ENCODE measurements at regions of chr1 and their contacts with region 1.

Region 1: GRCh38 chr1:145996433-145997015 is at the start of gene TXNIP:
- DNase-seq: peak; percentile 89
- H3K4me3 Mint-ChIP-seq: peak within 1 kb of the TSS; percentile 85
- H3K27ac Mint-ChIP-seq: peak within 1 kb of the TSS; percentile 95
- H3K4me1 Mint-ChIP-seq: peaks cover 62% of the 10 kb centered on the region
- H3K27me3 Mint-ChIP-seq: no peaks in the 10 kb centered on the region
- total RNA-seq, gene TXNIP: 37.8 and 39.1 TPM in 2 replicates

Region 2: GRCh38 chr1:145918144-145918992 is 78.2 kb before region 1 on chr1 and contains the start of gene PEX11B:
- intact Hi-C with region 1: loop called (anchors 5 kb)
- DNase-seq: peak; percentile 88
- H3K4me3 Mint-ChIP-seq: peak within 1 kb of the TSS; percentile 88
- H3K27ac Mint-ChIP-seq: peak within 1 kb of the TSS; percentile 92
- H3K4me1 Mint-ChIP-seq: peaks cover 35% of the 10 kb centered on the region
- H3K27me3 Mint-ChIP-seq: no peaks in the 10 kb centered on the region
- total RNA-seq, gene PEX11B: 22.1 and 23.4 TPM in 2 replicates

Region 3: GRCh38 chr1:145978854-145979759 is 17.4 kb before region 1 on chr1:
- intact Hi-C with region 1: loop called (anchors 1 kb)
- DNase-seq: peak; percentile 84
- H3K4me3 Mint-ChIP-seq: no peak overlapping the region
- H3K27ac Mint-ChIP-seq: no peak overlapping the region
- H3K4me1 Mint-ChIP-seq: peaks cover 31% of the 10 kb centered on the region
- H3K27me3 Mint-ChIP-seq: no peaks in the 10 kb centered on the region

Region 4: DNA sequence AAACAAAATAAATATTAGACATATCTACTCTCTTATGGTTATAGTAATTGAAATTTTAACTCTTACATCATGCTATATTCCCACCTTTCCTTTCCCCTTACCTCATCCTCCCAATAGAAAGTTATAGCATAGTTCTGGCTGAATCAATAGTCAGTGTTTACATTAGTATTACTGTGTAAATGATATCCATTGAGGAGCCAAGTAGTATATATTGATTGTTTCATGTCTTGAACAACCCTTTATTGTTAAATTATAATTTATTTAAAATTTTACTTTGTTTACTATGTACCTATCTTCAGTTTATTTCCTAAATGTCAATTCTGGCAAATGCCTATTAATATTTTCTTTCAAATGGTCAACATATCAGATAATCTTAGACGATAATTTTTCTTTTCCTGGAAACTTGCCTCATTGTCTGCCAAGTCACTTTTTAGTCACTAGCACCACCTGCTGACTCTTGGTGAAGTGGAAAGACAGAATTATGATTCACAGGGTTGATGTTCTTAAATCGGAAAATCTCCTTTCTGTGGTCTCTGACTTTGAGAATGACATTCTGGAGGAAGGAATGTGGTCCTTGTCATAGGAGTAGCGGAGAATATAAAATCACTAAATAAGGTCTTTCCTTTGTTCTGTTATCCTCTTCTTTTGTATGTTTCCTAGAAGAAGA is 16.3 kb after region 1 on chr1:
- intact Hi-C with region 1: loop called (anchors 2 kb)
- DNase-seq: no peak
- H3K4me3 Mint-ChIP-seq: no peak overlapping the region
- H3K27ac Mint-ChIP-seq: no peak overlapping the region
- H3K4me1 Mint-ChIP-seq: peaks cover 14% of the 10 kb centered on the region
- H3K27me3 Mint-ChIP-seq: peaks cover 24% of the 10 kb centered on the region

Region 5: GRCh38 chr1:146049436-146049835 is 52.9 kb after region 1 on chr1:
- intact Hi-C with region 1: loop called (anchors 5 kb)
- DNase-seq: no peak
- H3K4me3 Mint-ChIP-seq: no peak overlapping the region
- H3K27ac Mint-ChIP-seq: no peak overlapping the region
- H3K4me1 Mint-ChIP-seq: peaks cover 16% of the 10 kb centered on the region
- H3K27me3 Mint-ChIP-seq: no peaks in the 10 kb centered on the region